Activated CD4-positive, alpha-beta T cell treated with anti-CD3 and anti-CD28 coated beads for 36 hours (primary cell): ENCODE measurements at regions of chr11 and their contacts with region 1.

Region 1: GRCh38 chr11:41206388-41206787 is 253.1 kb downstream of the LRRC4C start:
- DNase-seq: no peak
- ATAC-seq: no peak
- H3K4me3 Mint-ChIP-seq: no peak overlapping the region
- H3K27ac Mint-ChIP-seq: no peak overlapping the region
- H3K4me1 Mint-ChIP-seq: no peaks in the 10 kb centered on the region
- H3K27me3 Mint-ChIP-seq: no peaks in the 10 kb centered on the region

Region 2: DNA sequence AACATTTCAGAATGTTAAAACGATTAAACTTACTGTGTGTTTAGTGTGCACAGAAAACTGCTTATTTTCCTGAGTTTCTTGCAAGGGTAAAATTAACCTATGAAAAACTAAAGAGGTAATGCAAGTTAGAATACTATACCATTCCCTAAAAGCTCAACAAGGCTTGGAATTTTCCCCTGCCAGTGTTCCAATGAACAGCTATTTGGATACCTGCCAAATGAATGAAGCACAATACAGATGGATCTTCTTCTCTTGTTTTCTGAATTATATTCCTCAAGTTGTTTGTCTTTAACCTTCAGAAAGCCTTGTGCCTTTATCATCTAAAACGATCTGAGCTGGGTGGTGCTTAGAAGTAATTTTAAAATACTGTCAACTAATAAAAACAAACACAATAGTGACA is 48.6 kb after region 1 on chr11:
- CTCF ChIA-PET with region 1: no interaction called
- POLR2A ChIA-PET with region 1: no interaction called
- intact Hi-C with region 1: loop called in 1 of 2 experiments (anchors 5 kb)
- DNase-seq: no peak
- ATAC-seq: no peak
- H3K4me3 Mint-ChIP-seq: no peak overlapping the region
- H3K27ac Mint-ChIP-seq: no peak overlapping the region
- H3K4me1 Mint-ChIP-seq: no peaks in the 10 kb centered on the region
- H3K27me3 Mint-ChIP-seq: no peaks in the 10 kb centered on the region